ENCODE measurements at regions of chr1 and their contacts with region 1.

Region 1: DNA sequence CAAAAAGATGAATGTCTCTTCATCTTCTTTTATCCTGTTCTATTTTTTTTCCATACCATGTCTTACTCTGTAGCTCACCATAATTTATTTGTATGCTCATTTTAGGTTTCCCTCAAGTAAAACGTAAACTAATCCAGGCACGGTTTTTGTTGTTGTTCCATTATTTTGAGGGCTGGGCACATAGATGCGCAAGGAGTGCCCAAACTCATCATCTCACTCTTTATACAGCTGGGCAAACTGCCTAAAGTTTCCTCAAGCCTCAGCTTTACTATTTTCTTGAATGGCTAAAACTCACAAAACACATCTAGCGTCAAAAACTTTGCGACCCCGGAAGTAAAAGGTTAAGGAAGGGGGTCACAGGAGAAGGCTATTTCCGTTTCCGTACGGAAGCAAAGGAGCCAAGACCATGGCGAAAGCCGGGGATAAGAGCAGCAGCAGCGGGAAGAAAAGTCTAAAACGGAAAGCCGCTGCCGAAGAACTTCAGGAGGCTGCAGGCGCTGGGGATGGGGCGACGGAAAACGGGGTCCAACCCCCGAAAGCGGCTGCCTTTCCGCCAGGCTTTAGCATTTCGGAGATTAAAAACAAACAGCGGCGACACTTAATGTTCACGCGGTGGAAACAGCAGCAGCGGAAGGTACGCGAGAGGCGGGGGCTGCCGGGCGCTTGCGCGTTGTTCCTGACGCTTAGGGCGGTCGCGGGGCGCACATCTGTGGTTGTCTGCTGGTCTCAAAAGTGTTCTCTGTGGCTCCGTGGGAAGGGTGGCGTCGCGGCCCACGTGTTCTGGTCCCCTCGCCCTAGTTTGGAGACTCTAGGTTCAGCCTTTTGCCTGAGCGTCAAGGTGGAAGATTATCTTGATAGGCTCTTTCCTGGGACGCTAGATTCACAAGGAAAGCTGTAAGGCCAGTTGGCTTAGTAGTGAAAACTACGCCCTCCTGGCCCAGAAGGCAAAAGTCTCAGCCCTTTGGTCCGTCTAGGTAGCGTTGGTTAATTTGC is at the start of gene RPF1:
- DNase-seq: peak; percentile 82
- H3K4me3 Mint-ChIP-seq: peak within 1 kb of the TSS; percentile 96
- H3K27ac Mint-ChIP-seq: peak within 1 kb of the TSS; percentile 96
- H3K4me1 Mint-ChIP-seq: peaks cover 34% of the 10 kb centered on the region
- H3K27me3 Mint-ChIP-seq: peaks cover 16% of the 10 kb centered on the region
- total RNA-seq, gene RPF1: 55.0 to 56.5 TPM

Region 2: GRCh38 chr1:85707990-85708828 is 1229.0 kb after region 1 on chr1 and contains the start of gene ZNHIT6:
- CTCF ChIA-PET with region 1: no interaction called
- POLR2A ChIA-PET with region 1: no interaction called
- intact Hi-C with region 1: loop called (anchors 2 kb)
- DNase-seq: peak; percentile 93
- H3K4me3 Mint-ChIP-seq: no peak within 1 kb of the TSS
- H3K27ac Mint-ChIP-seq: no peak within 1 kb of the TSS
- H3K4me1 Mint-ChIP-seq: peaks cover 23% of the 10 kb centered on the region
- H3K27me3 Mint-ChIP-seq: no peaks in the 10 kb centered on the region
- total RNA-seq, gene ZNHIT6: 18.7 TPM

Measured in activated CD4-positive, alpha-beta memory T cell treated with anti-CD3 and anti-CD28 coated beads for 36 hours (primary cell).